Activated CD4-positive, alpha-beta T cell treated with anti-CD3 and anti-CD28 coated beads, Interleukin-2, amount 10 ng/mL, durations not matched to agents 24 days and 14 days (primary cell): ENCODE measurements at regions of chr3 and their contacts with region 1.

Region 1: DNA sequence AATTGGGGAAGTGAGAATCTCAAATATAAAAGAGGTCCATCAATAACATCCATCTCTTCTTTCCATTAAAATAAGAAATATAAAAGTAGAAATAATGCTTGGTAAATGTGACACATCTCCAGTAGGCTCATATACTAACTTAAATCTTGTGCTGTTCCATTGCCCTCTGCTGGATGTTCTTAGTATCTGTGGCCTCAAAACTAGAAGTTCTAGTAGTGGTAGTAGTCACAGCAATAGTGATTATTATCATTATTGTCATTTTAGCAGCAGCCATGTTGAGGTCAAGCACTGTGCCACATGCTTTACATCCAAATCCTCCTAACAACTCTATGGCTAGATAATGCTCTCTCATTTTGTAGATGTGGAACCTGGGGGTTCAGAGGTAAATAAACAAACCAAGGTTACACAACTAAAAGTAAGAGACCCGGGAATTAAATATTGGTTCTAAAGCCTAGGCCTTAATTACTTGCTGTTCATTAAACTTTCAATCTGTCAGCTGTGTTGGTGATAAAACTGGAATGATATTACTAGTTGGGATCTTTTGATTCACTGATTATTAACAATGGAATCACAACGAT is 20.2 kb upstream of the BTLA start:
- DNase-seq: peak; percentile 83
- H3K4me3 Mint-ChIP-seq: no peak overlapping the region
- H3K27ac Mint-ChIP-seq: no peak overlapping the region
- H3K4me1 Mint-ChIP-seq: peaks cover 20% of the 10 kb centered on the region
- H3K27me3 Mint-ChIP-seq: no peaks in the 10 kb centered on the region

Region 2: DNA sequence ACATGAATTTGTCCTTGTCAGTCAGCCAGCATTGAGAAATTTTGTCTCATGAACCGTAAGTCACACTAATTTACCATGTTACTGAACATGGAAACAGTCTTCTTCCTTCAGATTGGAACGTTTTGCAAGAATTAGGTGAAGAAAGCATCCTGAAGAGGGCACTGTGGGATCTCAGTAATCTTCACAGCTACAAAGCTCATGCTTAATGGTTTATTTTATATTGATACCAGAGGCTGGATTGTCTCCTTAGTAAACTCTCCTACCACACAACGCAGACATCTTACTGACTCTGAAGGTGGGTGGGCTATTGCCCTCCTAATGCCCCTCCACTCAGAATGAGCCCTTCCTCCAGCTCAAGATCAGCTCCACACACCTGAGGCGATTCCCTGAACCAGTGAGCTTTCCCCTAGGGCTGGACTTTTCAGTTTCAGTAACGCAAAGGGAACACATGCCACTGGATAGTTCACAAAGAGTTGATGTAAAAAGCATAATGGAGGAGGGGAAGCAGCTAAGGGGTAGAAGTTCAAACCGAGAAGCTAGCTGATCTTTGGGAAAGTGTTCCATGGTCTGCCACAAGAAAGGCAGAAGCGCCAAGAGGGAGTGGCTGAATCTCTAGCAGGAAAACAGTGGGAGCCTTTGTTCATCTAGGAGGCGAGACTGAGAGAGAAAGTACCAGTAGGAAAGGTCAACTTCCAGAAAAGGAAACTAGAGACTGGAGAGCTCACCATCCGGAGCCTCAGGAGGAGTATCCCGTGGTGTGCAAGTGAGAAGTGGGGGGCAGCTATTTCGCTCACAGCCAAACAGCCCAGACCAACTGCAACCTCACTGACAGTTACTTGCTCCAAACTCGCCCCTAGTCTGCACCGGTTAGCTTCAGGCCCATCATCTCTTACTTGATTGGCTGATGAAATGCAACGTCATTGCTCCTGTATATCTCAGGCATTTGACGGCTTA is 225.9 kb before region 1 on chr3 and contains the start of gene SLC9C1:
- intact Hi-C with region 1: loop called (anchors 1 kb)
- DNase-seq: peak; percentile 87
- H3K4me3 Mint-ChIP-seq: peak within 1 kb of the TSS; percentile 76
- H3K27ac Mint-ChIP-seq: peak within 1 kb of the TSS; percentile 60
- H3K4me1 Mint-ChIP-seq: peaks cover 26% of the 10 kb centered on the region
- H3K27me3 Mint-ChIP-seq: no peaks in the 10 kb centered on the region
- total RNA-seq, gene SLC9C1: not detected in 2 replicates